HCT116 (cell line): ENCODE measurements at regions of chr1 and their contacts with region 1.

Region 1: DNA sequence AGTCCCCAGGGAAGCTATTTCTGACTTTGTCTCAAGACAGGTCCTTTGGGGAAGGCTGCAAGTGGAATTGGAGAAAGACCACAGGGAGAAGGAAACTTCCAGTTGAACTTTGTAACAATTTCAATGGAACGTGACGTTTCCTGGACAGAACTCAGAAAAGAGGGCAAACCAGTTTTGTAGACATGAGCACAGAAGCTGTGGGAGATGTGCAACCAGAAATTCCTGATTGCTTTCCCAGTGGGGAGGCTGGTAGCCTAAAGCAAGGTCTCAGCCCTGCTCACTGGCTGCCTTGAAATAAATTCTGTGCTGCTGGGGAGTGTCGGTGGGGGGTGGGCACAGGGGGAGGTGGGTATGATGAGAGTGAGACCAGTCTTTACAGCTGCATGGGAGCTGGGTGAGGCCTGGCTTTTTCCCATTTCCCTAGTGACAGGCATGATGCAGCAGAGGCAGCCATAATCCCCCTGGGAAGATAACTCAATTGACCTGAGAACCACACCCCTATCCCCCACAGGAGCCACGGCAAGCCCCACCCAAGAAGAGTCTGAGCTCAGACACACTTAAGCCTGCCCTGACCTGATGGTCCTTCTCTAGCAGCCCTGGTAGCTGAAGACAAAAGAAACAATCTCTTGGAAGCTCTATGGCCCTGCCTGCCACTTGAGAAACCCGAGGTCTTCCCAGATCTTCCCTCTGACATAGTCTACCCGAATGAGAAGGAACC is 1206.6 kb upstream of the ADGRL2 start:
- DNase-seq: no peak
- ATAC-seq: no peak
- H3K4me3 ChIP-seq: no peak overlapping the region
- H3K27ac ChIP-seq: no peak overlapping the region
- H3K4me1 ChIP-seq: no peaks in the 10 kb centered on the region; a peak in 1 of 4 replicates
- H3K27me3 ChIP-seq: no peaks in the 10 kb centered on the region
- CTCF ChIP-seq: no peak
- POLR2A ChIP-seq: no peak
- RAD21 ChIP-seq: no peak

Region 2: GRCh38 chr1:80293818-80294217 is 300.4 kb before region 1 on chr1:
- CTCF ChIA-PET with region 1: no interaction called
- POLR2A ChIA-PET with region 1: no interaction called
- RAD21 ChIA-PET with region 1: no interaction called
- intact Hi-C with region 1: loop called (anchors 10 kb)
- DNase-seq: no peak
- ATAC-seq: no peak
- H3K4me3 ChIP-seq: no peak overlapping the region
- H3K27ac ChIP-seq: no peak overlapping the region
- H3K4me1 ChIP-seq: no peaks in the 10 kb centered on the region
- H3K27me3 ChIP-seq: no peaks in the 10 kb centered on the region
- CTCF ChIP-seq: no peak
- POLR2A ChIP-seq: no peak
- RAD21 ChIP-seq: no peak

Region 3: DNA sequence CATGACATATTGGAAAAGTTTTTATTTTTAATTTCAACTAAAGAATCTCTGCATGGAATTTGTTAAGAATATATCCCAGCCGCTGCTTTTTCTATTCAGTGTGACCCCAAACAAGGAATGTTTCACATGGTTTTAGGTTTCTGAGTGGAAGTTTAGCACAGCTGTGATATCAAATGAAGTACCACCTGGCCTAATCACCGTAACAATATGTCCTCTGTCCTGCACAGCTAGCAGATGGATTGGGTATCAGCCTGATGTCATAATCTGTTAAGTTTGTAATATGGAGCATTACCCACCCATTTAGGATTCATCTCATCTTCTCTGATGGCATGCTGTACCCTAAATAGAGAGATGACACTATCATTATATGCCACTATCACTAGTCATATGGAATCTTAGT is 242.9 kb after region 1 on chr1:
- CTCF ChIA-PET with region 1: no interaction called
- POLR2A ChIA-PET with region 1: no interaction called
- RAD21 ChIA-PET with region 1: no interaction called
- intact Hi-C with region 1: no loop called
- DNase-seq: no peak
- ATAC-seq: no peak
- H3K4me3 ChIP-seq: no peak overlapping the region
- H3K27ac ChIP-seq: no peak overlapping the region
- H3K4me1 ChIP-seq: no peaks in the 10 kb centered on the region
- H3K27me3 ChIP-seq: no peaks in the 10 kb centered on the region
- CTCF ChIP-seq: no peak
- POLR2A ChIP-seq: no peak
- RAD21 ChIP-seq: no peak